ENCODE measurements at regions of chr17 and their contacts with region 1.

Region 1: DNA sequence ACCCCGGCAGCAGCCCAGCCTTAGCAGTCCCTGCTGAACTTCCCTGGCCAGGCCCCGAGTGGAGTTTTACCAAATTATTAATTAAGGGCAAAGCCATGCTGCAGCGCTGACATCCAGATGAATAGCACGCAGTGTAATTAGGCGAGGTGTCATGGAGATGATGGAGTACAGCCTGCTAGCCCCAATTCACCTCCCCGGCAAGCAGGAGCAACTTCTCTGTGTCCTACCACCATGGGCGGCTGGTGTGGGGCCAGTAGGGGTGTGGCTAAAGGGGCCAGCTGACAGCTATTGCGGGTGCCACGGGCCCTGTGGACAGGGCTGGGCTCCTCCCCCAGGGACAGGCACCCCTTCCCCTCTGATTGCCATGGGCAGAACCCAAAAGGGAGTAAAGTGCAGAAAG is 24.5 kb downstream of the ENDOV start:
- DNase-seq: no peak
- H3K4me3 ChIP-seq: no peak overlapping the region
- H3K27ac ChIP-seq: no peak overlapping the region
- H3K4me1 ChIP-seq: peaks cover 10 to 17% of the 10 kb centered on the region in 2 donors
- H3K27me3 ChIP-seq: no peaks in the 10 kb centered on the region
- CTCF ChIP-seq: no peak

Region 2: GRCh38 chr17:80307994-80308691 is 131.4 kb before region 1 on chr17:
- intact Hi-C with region 1: no loop called
- DNase-seq: no peak
- H3K4me3 ChIP-seq: no peak overlapping the region
- H3K27ac ChIP-seq: no peak overlapping the region
- H3K4me1 ChIP-seq: no peaks in the 10 kb centered on the region
- H3K27me3 ChIP-seq: no peaks in the 10 kb centered on the region
- CTCF ChIP-seq: no peak

Region 3: GRCh38 chr17:80474231-80474960 is 34.9 kb after region 1 on chr17:
- intact Hi-C with region 1: loop called (anchors 5 kb)
- DNase-seq: no peak
- H3K4me3 ChIP-seq: peak overlapping the region in 1 of 2 donors; percentile 4
- H3K27ac ChIP-seq: no peak overlapping the region
- H3K4me1 ChIP-seq: peaks cover 21 to 34% of the 10 kb centered on the region in 2 donors
- H3K27me3 ChIP-seq: peaks cover 35% of the 10 kb centered on the region
- CTCF ChIP-seq: no peak

Measured in ascending aorta (tissue), 2 donors.